CD8-positive, alpha-beta memory T cell (primary cell): ENCODE measurements at regions of chr2 and their contacts with region 1.

Region 1: DNA sequence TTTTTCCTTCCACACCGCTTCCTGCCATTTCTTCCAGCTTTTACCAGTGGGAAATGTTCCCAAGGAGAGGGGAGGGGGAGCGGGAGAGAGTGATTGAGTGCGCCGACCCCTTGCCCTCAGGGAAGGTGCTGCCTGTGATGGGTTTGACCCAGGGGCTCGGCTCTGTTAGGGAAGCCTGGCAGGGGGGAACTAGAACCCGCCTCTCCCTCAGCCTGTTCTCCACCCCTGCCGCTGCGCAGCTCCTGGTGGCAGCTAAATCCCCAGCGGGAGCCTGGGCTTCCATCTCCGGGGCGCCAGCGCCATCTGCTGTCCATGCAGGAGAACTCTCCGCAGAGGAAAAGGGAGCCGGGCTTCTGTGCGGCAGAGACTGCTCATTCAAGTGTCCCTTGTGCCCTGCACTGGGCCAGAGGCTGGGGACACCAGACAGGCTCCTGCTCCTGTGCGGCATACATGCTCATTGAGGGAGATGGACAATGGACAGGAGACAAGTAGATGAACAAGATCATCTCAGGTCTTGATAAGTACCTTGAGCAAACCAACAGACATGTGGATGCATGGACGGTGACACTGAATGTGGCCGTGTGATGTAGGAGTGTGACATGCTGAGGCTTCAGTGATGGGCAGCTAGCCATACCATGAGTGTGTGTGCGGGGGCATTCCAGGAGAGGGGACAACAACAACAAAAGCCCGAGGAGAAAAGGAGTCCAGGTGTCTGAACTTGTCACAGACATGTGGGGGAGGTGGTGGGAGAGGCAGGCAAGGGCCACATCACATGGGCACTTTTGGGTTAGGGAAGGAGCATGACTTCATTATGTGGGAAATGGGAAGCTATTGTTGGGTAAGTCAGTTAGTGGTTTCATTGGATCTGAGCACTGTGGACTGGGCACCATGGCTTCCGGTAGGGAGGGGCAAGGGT is 13.3 kb downstream of the CHPF start:
- DNase-seq: peak; percentile 75 to 87 (median 77)
- H3K4me3 ChIP-seq: no peak overlapping the region
- H3K4me3 Mint-ChIP-seq: no peak overlapping the region
- H3K27ac ChIP-seq: no peak overlapping the region
- H3K27ac Mint-ChIP-seq: peak overlapping the region in 1 of 8 donors; percentile 45
- H3K4me1 ChIP-seq: peaks cover 4% of the 10 kb centered on the region
- H3K4me1 Mint-ChIP-seq: peaks cover 0 to 4% (median 0%) of the 10 kb centered on the region in 3 donors
- H3K27me3 ChIP-seq: peaks cover 23% of the 10 kb centered on the region
- H3K27me3 Mint-ChIP-seq: peaks cover 25 to 73% of the 10 kb centered on the region in 2 donors

Region 2: GRCh38 chr2:219402665-219403515 is 127.4 kb before region 1 on chr2:
- CTCF ChIA-PET with region 1: interaction called, 77 read pairs
- POLR2A ChIA-PET with region 1: no interaction called
- DNase-seq: peak; percentile 41 to 65 (median 48)
- H3K4me3 ChIP-seq: no peak overlapping the region
- H3K4me3 Mint-ChIP-seq: no peak overlapping the region
- H3K27ac ChIP-seq: no peak overlapping the region
- H3K27ac Mint-ChIP-seq: peak overlapping the region in 1 of 8 donors; percentile 21
- H3K4me1 ChIP-seq: peaks cover under 1% of the 10 kb centered on the region
- H3K4me1 Mint-ChIP-seq: peaks cover 0 to 5% (median 0%) of the 10 kb centered on the region in 3 donors
- H3K27me3 ChIP-seq: no peaks in the 10 kb centered on the region
- H3K27me3 Mint-ChIP-seq: peaks cover 4 to 24% of the 10 kb centered on the region in 2 donors

Region 3: DNA sequence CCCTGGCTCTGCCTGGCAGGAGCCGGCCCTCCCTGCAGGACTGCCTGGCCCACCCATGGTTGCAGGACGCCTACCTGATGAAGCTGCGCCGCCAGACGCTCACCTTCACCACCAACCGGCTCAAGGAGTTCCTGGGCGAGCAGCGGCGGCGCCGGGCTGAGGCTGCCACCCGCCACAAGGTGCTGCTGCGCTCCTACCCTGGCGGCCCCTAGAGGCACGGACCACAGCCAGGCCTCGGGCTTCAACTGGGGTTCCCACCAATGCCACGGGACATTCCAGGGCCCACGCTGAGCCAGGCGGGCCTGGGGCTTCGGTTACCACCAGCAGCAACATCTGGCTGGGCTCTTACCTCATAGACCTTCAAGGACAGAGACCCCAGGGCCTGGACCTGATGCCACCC is 37.7 kb before region 1 on chr2:
- CTCF ChIA-PET with region 1: interaction called, 102 read pairs
- POLR2A ChIA-PET with region 1: no interaction called
- DNase-seq: no peak
- H3K4me3 ChIP-seq: no peak overlapping the region
- H3K4me3 Mint-ChIP-seq: no peak overlapping the region
- H3K27ac ChIP-seq: no peak overlapping the region
- H3K27ac Mint-ChIP-seq: no peak overlapping the region
- H3K4me1 ChIP-seq: peaks cover 9% of the 10 kb centered on the region
- H3K4me1 Mint-ChIP-seq: peaks cover 4 to 19% (median 7%) of the 10 kb centered on the region in 3 donors
- H3K27me3 ChIP-seq: peaks cover 34% of the 10 kb centered on the region
- H3K27me3 Mint-ChIP-seq: peaks cover 51 to 65% of the 10 kb centered on the region in 2 donors

Region 4: DNA sequence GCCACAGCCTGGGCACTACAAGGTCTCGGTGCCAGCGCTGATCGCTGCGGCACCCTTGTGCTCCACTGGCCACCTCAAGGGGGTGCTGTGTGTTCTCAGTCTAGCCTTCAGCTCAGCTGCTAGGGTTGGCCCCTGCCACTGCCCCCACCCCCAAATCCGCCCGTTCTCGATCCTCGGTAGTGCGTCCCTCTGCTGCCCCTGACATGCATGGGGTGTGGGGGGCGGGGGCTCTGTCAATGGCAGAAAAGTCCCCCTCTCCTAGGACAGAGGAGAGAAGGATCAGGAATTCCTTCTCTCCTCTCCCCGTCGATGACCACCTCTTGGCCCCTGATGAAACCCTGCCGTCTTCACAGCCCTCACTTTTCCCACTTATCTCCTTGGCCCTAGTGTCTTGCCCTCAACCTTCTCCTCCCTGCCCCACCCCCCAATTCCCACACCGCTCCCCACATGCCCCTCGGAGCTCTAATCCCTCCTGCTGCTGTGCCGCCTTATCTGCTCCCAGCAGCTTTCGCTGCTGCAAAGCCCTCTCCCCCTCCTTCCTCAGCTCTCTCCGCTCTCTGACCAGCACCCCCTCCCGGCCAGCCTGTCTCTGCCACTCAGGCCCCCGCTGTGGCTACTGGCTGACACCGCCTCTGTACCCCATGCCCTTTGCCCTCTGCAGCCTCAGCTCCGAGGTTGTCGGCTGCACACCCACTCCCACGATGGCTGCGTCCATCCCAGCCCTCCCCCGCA is 20.4 kb before region 1 on chr2:
- CTCF ChIA-PET with region 1: interaction called, 17 read pairs
- POLR2A ChIA-PET with region 1: no interaction called
- DNase-seq: peak in 4 of 5 donors; percentile 7 to 42 (median 29)
- H3K4me3 ChIP-seq: no peak overlapping the region
- H3K4me3 Mint-ChIP-seq: peak overlapping the region in 6 of 7 donors; percentile 19 to 71 (median 58)
- H3K27ac ChIP-seq: peak overlapping the region; percentile 43
- H3K27ac Mint-ChIP-seq: peak overlapping the region in 1 of 8 donors; percentile 21
- H3K4me1 ChIP-seq: peaks cover 15% of the 10 kb centered on the region
- H3K4me1 Mint-ChIP-seq: peaks cover 17 to 37% (median 20%) of the 10 kb centered on the region in 3 donors
- H3K27me3 ChIP-seq: peaks cover 12% of the 10 kb centered on the region
- H3K27me3 Mint-ChIP-seq: peaks cover 42 to 56% of the 10 kb centered on the region in 2 donors